HEK293T (cell line): ENCODE measurements at regions of chr6 and their contacts with region 1.

Region 1: DNA sequence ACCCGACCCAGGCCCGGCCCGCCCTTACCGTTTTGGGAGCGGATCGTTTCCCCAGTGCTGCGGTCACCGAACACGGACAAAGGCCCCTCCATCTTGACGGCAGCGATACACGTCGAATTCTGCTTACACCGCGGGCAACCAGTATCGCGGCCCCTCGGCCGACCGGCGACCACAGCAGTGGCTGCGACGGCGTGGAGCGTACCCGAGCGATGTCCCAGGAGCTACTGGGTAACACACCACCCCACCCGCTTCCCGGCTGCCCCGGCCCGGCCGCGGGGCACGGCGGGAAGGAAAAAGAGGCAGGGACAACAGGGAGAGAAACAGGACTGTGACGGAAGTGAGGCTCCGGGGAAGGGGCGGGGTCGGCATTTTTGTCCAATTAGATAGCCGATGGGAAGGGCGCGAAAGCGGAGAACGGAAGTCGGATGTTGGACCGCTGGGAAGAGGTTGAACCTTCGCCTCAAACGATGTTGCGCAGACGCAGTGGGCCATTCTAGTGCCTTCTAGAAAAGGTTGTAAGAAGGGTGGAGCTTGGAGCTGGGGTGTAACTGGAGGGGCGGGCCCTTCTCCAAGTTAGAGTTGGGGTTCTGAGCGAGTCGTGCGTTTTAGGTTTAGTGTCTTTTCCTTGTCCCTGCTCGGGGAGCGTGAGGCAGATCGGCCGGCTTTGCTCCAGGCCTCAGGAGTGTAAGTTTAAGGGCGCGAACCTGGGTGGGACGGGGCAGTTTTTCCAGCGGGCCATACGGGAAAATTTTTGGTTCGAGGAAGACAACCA is at the start of gene TCP1:
- DNase-seq: peak; percentile 97

Region 2: GRCh38 chr6:159646733-159647132 is 142.8 kb before region 1 on chr6:
- CTCF ChIA-PET with region 1: no interaction called
- POLR2A ChIA-PET with region 1: no interaction called
- DNase-seq: no peak

Region 3: DNA sequence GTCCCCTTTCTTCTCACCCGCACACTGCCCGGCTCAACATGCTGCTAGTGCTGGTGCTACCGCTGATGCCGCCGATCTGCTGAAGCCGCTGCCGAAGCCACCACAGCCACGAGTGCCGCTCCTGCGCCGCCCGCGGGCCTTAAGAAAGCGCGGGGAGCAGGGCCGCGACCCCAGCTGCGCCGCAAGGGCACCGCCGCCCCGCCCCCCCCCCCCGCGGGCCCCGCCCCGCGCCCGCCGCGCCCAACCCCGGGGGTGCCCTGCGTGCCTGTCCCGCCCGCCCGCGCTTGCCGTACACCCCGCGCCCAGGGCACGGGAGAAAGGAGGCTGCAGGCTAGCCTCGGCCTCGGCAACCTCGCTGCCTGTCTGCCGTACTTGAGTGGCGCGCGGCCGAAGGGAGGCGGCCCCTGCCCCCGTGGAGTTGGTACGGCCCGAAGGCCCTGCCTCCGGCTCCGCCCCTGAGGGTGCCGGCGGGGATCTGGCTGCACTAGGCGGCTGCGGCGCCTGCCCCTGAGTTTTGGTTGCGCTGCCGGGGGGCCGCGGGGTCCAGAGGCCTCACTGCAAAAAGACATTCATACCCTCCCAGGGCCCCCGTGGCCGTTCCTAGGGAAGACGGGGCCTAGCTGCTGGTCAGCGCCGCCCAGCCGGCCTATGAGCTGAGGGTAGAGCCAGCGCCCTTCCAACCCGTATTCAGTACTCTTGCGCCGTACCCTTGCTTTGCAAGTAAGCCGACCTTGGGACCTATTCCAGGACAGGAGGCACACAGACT is 96.3 kb before region 1 on chr6 and contains the start of gene SOD2:
- CTCF ChIA-PET with region 1: no interaction called
- POLR2A ChIA-PET with region 1: interaction called, 16 read pairs
- DNase-seq: peak; percentile 91

Region 4: DNA sequence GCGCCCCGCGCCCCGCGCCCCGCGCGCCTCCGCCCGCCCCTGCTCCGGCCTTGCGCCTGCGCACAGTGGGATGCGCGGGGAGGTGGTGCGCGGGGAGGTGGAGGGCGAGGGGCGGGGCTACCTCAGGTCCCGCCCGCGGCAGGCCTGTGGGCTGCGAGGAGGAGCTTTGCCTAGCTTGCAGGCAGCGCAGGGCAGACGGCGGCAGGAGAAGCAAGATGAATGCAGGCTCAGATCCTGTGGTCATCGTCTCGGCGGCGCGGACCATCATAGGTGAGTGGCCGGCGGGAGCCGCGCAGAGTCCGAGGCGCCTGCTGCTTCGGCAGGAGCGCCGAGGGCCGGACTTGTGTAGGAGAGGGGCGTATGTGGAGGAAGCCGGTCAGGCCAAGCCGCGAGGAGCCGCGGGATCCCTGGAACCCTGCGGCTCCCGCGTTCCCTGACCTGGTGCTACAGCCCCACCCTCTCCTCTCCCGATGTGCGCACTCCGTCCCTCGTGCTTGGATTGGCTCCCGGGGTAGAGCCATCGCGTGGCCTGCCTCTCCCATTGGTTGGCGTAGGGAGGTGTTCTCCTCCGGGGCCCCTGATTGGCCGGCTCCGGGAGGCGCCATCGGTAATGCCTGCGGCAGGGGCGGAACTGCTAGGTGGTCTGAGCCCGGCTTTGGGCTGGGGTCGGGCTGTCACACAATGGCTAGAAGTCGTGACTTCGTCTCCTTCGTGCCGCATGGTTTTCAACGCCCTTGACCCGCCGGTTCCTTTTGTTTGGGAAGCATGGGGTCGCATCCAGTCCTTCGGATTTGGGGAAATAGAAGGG is 27.5 kb before region 1 on chr6 and contains the start of gene ACAT2:
- CTCF ChIA-PET with region 1: no interaction called
- POLR2A ChIA-PET with region 1: interaction called, 41 read pairs
- DNase-seq: peak; percentile 99

Region 5: GRCh38 chr6:159777240-159777904 is 12.2 kb before region 1 on chr6:
- CTCF ChIA-PET with region 1: no interaction called
- POLR2A ChIA-PET with region 1: interaction called, 10 read pairs
- DNase-seq: no peak

Region 6: DNA sequence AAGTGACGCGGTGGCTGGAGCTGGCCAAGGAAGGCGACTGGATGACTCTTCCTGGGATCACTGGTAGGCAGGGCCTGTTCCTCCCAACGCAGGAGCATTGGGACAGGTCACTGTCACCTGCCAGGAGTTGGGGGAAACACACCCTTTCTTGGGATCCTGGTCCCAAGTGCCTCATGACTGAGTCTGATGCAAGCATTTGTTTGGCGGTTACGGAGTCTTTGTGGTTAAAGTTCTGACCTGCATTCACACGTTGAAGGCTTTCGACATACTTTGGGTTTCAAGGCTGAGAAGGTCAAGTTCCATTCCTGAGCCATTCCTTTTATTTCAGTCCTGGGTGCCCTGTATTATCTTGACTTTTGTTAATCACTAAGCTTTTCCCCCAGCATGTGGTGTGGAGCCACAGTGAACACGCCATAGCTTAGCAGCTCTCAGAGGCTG is 16.5 kb after region 1 on chr6:
- CTCF ChIA-PET with region 1: no interaction called
- POLR2A ChIA-PET with region 1: interaction called, 41 read pairs
- DNase-seq: no peak